ENCODE measurements at regions of chr15 and their contacts with region 1.

Region 1: DNA sequence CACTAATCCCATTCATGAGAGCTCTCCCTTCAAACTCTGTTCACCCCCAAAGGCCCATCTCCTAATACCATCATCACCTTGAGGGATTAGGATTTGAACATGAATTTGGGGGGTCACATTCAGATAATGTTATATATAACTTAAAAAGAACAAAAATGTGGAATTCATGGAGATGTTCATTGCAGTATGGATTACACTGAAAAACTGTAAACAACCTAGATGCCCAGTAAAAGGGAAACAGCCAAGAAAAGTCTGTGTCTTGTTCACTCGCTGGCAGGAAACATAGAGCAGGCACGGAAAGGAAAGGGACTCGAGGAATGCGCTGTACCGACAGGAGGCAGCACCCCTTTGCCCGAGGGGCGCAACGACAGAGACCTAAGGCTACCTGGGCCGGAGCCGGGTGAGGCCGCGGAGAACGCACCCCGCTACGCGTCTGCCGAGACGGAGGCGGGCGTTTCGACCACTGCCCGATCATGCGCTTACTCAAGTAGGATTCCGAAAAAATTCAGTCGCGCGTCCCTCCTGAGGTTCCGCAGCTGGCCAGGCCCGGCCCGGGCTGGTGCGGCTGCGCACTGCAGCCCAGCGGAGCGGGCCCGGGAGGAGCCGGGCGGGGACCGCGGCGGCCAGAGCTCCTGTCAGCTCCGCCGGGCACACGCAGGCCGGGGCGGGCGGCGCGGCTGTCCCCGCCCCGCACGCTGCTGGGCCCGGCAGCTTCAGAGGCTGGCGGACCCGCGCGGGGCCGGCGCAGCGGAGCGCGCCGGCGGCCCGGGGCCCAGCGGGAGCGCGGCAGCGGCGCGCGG is 862 bp upstream of the MAN2A2 start:
- DNase-seq: peak; percentile 57
- ATAC-seq: peak; percentile 96
- H3K4me3 ChIP-seq: peak overlapping the region; percentile 67 to 70
- H3K27ac ChIP-seq: peak overlapping the region; percentile 94
- H3K4me1 ChIP-seq: peaks cover 12% of the 10 kb centered on the region
- H3K27me3 ChIP-seq: no peaks in the 10 kb centered on the region
- CTCF ChIP-seq: peak; percentile 93

Region 2: GRCh38 chr15:90814191-90814821 is 87.9 kb before region 1 on chr15:
- CTCF ChIA-PET with region 1: no interaction called
- POLR2A ChIA-PET with region 1: no interaction called
- in situ Hi-C with region 1: no loop called
- intact Hi-C with region 1: no loop called
- DNase-seq: no peak
- ATAC-seq: 0 out of 2 replicates have a peak, but pooled peaks have one; percentile 11
- H3K4me3 ChIP-seq: no peak overlapping the region
- H3K27ac ChIP-seq: no peak overlapping the region
- H3K4me1 ChIP-seq: no peaks in the 10 kb centered on the region
- H3K27me3 ChIP-seq: no peaks in the 10 kb centered on the region
- CTCF ChIP-seq: no peak

Region 3: DNA sequence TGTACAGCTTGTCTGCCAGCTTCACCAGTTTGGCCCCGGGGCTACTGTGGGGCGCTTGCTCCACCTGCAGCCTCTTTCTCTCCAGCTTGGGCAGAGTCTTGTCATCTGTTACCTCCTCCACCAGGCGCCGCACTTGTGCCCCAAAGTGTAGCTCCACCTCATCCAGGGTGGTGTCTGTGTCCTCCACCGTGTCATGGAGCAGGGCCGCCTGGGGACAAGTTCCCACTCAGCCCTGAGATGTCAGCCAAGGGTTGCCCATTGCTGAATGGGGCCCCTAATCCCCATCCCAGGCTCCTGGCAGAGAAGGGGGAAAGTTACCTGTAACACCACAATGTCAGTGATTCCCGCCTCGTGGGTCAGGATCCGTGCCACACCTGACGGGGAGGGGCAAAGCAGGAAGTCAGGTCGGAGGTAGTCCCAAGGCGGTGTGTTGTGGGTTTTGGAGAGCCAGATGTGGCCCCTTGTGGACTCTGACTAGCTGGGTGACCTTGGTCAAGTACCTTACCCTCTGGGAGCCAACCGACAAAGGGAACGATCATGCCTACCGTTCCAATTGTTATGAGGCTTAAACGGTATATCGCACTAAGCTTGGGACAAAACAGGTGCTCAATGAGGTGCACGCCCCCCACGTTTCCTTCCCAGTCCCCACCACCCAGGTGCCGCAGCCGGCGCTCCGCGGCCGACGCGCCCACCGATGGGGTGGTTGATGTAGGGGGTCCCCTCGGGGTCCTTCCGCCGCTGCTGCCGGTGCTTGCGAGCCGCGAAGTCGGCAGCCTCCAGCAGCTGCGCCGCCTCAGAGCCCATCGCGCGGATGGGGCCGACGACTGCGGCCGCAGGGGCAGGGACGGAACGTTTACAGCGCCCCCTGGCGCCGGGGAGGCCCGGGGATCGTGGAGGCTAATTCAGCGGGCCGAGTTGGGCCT is 29.8 kb after region 1 on chr15 and contains the start of gene HDDC3:
- CTCF ChIA-PET with region 1: interaction called, 16 read pairs
- POLR2A ChIA-PET with region 1: no interaction called
- in situ Hi-C with region 1: no loop called
- intact Hi-C with region 1: no loop called
- DNase-seq: no peak
- ATAC-seq: peak; percentile 75
- H3K4me3 ChIP-seq: peak within 1 kb of the TSS; percentile 76 to 78
- H3K27ac ChIP-seq: peak within 1 kb of the TSS; percentile 99
- H3K4me1 ChIP-seq: peaks cover 29% of the 10 kb centered on the region
- H3K27me3 ChIP-seq: no peaks in the 10 kb centered on the region
- CTCF ChIP-seq: peak; percentile 94
- total RNA-seq, gene HDDC3: 5.3 TPM

Region 4: GRCh38 chr15:91311986-91312385 is 409.7 kb after region 1 on chr15:
- CTCF ChIA-PET with region 1: no interaction called
- POLR2A ChIA-PET with region 1: no interaction called
- in situ Hi-C with region 1: no loop called
- intact Hi-C with region 1: no loop called
- DNase-seq: no peak
- ATAC-seq: no peak
- H3K4me3 ChIP-seq: no peak overlapping the region
- H3K27ac ChIP-seq: no peak overlapping the region
- H3K4me1 ChIP-seq: no peaks in the 10 kb centered on the region
- H3K27me3 ChIP-seq: peaks cover 18% of the 10 kb centered on the region
- CTCF ChIP-seq: no peak

Measured in Panc1 (cell line).